ENCODE measurements at regions of chrX and their contacts with region 1.

Region 1: GRCh38 chrX:39149761-39150160 is 348.5 kb downstream of the MID1IP1 start:
- DNase-seq: peak; percentile 37 to 87
- ATAC-seq: peak; percentile 70

Region 2: DNA sequence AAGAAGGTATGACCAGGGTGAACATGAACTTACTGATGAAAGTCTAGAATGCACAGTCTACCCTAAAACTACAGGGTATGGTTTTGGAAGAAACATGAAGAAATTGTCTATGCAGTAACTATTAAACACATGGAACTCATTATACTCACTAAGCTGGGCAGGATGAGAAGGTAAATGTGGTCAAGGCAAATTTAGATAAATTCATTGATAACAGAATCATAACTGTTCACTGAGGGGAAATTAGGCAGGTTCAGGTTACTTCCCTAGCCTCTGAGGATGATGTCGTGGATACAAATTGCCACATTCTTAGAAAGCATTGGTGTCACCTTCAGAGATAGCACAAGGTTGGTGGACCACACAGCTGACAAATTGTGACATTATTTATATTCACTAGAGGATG is 388.9 kb before region 1 on chrX:
- intact Hi-C with region 1: loop called in 1 of 2 experiments (anchors 5 kb)
- DNase-seq: no peak
- ATAC-seq: no peak

Measured in left colon (tissue), 2 donors.